ENCODE measurements at regions of chr5 and their contacts with region 1.

Region 1: DNA sequence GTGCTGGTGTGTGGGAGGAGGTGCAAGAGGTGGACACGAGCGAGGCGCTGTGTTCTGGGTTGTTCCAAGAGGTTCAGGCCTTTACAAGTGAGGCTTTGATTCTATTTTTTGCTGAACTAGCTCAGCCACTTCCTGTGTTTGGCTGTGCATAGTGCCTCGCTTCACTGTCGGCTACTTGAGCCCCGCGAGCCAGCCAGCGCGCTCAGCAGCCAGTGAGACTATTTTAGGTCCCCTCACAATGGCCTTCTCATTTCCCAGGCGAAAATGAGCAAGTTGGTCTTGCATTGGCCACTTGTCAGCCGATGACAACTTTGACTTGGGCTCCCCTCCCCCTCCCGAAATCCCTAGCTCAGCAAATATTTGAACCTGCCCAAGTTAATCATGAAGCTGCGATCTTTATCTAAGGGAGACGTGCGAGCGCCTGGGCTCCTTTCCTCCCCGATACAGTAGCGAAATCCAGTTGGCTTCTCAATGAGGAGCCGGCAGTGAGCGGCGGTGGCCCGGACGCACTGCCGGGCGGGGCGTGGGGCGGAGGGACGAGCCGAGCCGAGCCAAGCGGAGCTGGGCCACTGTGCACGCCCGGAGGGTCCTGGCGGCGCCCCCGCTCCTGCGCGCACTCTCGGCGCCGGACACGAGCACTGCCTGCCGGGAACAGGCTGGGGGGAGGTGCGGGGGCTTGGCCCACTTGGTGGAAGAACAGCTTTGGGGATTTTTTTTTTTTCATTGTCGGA is 72.6 kb downstream of the PIK3R1 start:
- DNase-seq: peak; percentile 75
- H3K4me3 Mint-ChIP-seq: peak overlapping the region; percentile 79
- H3K27ac Mint-ChIP-seq: peak overlapping the region; percentile 84
- H3K4me1 Mint-ChIP-seq: peaks cover 59% of the 10 kb centered on the region
- H3K27me3 Mint-ChIP-seq: no peaks in the 10 kb centered on the region
- CTCF ChIP-seq: no peak

Region 2: DNA sequence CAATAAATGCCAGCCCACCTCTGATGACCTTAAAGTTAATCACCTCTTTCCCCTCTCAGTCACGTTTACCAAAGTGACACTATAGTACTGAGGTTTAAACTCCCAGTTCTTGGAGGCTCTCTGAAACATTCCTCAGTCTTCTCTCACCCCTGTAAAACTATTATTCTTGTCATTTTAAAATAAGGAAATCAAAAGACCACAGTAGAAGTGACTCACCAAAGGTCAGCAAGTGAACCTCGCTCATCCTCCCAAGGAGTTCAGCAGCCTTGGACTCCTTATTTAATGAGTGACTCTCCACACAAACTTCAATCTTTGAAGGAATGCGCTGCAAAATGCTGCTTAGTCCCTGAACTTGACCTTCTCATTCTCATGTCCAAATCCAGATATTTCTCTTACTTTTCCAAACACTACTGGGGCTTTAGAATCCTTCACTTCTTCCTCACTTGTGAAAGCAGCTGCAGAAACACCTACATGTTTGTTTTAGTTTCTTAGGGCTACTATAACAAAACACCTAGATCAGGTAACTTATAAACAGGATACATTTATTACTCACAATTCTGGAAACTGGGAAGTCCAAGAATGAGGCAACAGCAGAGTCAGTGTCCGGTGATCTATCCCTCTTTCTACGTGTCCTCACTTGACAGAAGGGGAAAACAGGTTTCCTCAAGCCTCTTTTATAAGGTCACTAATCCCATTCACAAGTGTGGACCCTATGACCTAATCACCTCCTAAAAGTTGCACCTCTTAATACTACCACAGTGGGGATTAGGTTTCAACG is 31.4 kb after region 1 on chr5:
- CTCF ChIA-PET with region 1: no interaction called
- intact Hi-C with region 1: no loop called
- DNase-seq: no peak
- H3K4me3 Mint-ChIP-seq: no peak overlapping the region
- H3K27ac Mint-ChIP-seq: peak overlapping the region; percentile 24
- H3K4me1 Mint-ChIP-seq: peaks cover 41% of the 10 kb centered on the region
- H3K27me3 Mint-ChIP-seq: no peaks in the 10 kb centered on the region
- CTCF ChIP-seq: no peak

Region 3: GRCh38 chr5:68331192-68332079 is 43.3 kb after region 1 on chr5:
- CTCF ChIA-PET with region 1: no interaction called
- intact Hi-C with region 1: loop called (anchors 5 kb)
- DNase-seq: no peak
- H3K4me3 Mint-ChIP-seq: no peak overlapping the region
- H3K27ac Mint-ChIP-seq: no peak overlapping the region
- H3K4me1 Mint-ChIP-seq: peaks cover 27% of the 10 kb centered on the region
- H3K27me3 Mint-ChIP-seq: no peaks in the 10 kb centered on the region
- CTCF ChIP-seq: no peak

Region 4: GRCh38 chr5:68460147-68460798 is 172.1 kb after region 1 on chr5:
- CTCF ChIA-PET with region 1: interaction called, 4 read pairs
- intact Hi-C with region 1: loop called (anchors 1 kb)
- DNase-seq: peak; percentile 52
- H3K4me3 Mint-ChIP-seq: no peak overlapping the region
- H3K27ac Mint-ChIP-seq: no peak overlapping the region
- H3K4me1 Mint-ChIP-seq: peaks cover 49% of the 10 kb centered on the region
- H3K27me3 Mint-ChIP-seq: no peaks in the 10 kb centered on the region
- CTCF ChIP-seq: peak; percentile 24

Region 5: DNA sequence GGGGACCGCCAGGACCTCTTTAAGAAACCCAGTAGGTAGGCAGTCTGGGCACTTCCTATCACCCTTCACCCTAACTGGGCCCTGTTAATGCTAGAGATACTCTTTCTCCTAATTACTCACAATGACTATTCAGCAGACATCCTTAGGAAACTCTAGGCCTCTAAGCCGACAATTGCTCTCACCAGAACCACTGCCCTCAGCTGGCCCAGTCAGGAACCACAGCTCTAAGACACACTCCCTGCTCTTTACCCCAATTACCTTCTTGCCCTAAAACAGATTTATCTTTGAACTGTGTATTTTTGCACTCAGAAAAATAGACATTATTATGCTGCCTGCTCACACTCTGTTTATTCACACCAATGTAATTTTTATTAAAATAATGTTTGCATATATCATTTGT is 373.1 kb after region 1 on chr5:
- CTCF ChIA-PET with region 1: no interaction called
- intact Hi-C with region 1: loop called (anchors 2 kb)
- DNase-seq: peak; percentile 16
- H3K4me3 Mint-ChIP-seq: no peak overlapping the region
- H3K27ac Mint-ChIP-seq: no peak overlapping the region
- H3K4me1 Mint-ChIP-seq: peaks cover 8% of the 10 kb centered on the region
- H3K27me3 Mint-ChIP-seq: no peaks in the 10 kb centered on the region
- CTCF ChIP-seq: peak; percentile 17

Region 6: DNA sequence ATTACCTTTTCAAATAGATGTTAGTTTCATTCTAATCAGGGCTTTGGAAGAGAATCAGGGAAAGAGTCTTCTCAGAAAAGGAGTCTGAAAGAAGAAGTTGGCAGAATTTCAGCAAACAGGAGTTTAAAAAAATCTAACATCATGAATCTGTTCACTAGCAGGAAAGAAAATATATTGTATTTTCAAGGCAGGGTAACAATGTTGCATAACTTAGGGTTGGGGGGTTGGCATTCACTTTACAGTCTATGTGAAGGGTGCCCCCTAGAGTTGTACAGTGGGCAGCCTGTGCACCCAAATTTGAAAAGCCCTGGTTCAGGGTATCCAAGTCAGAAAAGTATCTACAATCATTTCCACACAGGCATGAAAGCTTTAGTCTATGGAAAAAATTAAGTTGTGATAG is 457.3 kb after region 1 on chr5:
- CTCF ChIA-PET with region 1: no interaction called
- intact Hi-C with region 1: loop called (anchors 10 kb)
- DNase-seq: no peak
- H3K4me3 Mint-ChIP-seq: no peak overlapping the region
- H3K27ac Mint-ChIP-seq: no peak overlapping the region
- H3K4me1 Mint-ChIP-seq: no peaks in the 10 kb centered on the region
- H3K27me3 Mint-ChIP-seq: no peaks in the 10 kb centered on the region
- CTCF ChIP-seq: no peak

Region 7: DNA sequence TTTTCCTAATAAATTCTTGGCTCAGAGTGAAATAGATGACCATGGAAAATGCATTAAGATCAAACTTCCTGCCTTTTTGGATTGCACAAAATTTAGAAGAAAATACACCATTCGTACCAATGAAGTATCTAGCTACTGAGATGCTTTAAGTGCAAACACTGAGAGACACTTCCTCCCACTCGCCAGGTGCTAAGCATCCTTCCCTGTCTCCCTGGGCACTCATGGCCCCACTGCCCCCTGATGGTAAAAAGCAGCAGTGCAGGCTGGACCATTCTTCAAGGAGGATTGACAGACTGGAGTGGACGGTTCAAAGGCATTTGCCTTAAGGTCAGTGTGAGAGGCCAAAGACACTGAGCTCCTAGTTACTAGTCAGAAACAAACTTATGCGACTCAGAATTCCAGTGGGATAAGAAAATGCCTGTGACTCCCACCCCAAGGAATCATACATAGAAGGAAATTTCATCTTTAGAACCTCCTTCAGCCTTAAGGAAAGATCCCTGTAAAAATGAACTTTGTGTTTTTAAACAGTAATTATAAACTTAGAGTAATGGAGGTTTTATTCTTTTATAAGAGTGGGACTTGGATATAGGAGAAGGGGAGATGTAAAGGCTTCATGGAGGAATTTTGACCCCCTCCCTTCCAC is 719.7 kb after region 1 on chr5:
- CTCF ChIA-PET with region 1: no interaction called
- intact Hi-C with region 1: loop called (anchors 1 kb)
- DNase-seq: peak; percentile 85
- H3K4me3 Mint-ChIP-seq: no peak overlapping the region
- H3K27ac Mint-ChIP-seq: no peak overlapping the region
- H3K4me1 Mint-ChIP-seq: no peaks in the 10 kb centered on the region
- H3K27me3 Mint-ChIP-seq: peaks cover 14% of the 10 kb centered on the region
- CTCF ChIP-seq: peak; percentile 80

Measured in Calu3 (cell line).